ENCODE measurements at regions of chr11 and their contacts with region 1.

Region 1: DNA sequence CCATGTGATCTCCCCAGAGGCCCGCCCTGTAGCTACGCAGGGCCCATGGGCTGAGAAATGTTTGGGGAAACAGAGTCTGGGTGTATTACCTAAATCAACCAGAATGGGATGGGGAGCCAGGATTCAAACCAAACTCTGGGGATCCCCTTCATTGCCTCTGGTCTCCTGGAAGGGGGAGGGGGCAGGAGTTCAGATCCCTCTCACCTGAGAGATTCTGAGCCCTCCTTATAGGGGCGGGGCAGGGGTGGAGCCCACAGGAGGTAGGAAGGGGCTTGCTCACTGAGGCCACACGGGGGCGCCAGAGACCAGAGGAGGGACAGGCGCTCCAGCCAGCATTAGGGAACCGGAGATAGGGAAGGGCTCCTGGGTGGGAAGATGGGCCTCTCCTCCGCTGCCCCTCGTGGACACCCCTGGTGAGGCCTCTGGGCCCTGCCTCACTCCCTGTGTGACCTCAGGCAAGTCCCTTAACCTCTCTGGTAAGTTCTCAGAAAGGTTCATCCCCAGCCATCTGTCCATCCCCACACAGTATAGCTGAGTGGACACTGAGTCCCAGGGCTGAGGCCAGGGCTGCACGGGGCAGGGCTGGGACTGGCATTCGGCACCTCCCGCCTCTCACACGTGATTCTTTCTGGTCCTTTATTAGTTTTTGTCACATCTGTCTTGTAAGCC is 2.7 kb upstream of the CDC42BPG start:
- DNase-seq: peak; percentile 97
- H3K4me3 Mint-ChIP-seq: no peak overlapping the region
- H3K27ac Mint-ChIP-seq: peak overlapping the region; percentile 33
- H3K4me1 Mint-ChIP-seq: peaks cover 65% of the 10 kb centered on the region
- H3K27me3 Mint-ChIP-seq: no peaks in the 10 kb centered on the region
- CTCF ChIP-seq: peak; percentile 94

Region 2: GRCh38 chr11:64878494-64879243 is 31.5 kb after region 1 on chr11 and contains the start of gene EHD1:
- CTCF ChIA-PET with region 1: interaction called, 19 read pairs
- intact Hi-C with region 1: no loop called
- DNase-seq: peak; percentile 99
- H3K4me3 Mint-ChIP-seq: peak within 1 kb of the TSS; percentile 98
- H3K27ac Mint-ChIP-seq: peak within 1 kb of the TSS; percentile 93
- H3K4me1 Mint-ChIP-seq: peaks cover 28% of the 10 kb centered on the region
- H3K27me3 Mint-ChIP-seq: no peaks in the 10 kb centered on the region
- CTCF ChIP-seq: peak; percentile 7
- total RNA-seq, gene EHD1: 92.8 and 101 TPM in 2 replicates

Region 3: GRCh38 chr11:64894070-64894796 is 47.1 kb after region 1 on chr11:
- CTCF ChIA-PET with region 1: interaction called, 49 read pairs
- intact Hi-C with region 1: loop called (anchors 2 kb)
- DNase-seq: peak; percentile 93
- H3K4me3 Mint-ChIP-seq: peak overlapping the region; percentile 7
- H3K27ac Mint-ChIP-seq: no peak overlapping the region
- H3K4me1 Mint-ChIP-seq: peaks cover 32% of the 10 kb centered on the region
- H3K27me3 Mint-ChIP-seq: no peaks in the 10 kb centered on the region
- CTCF ChIP-seq: peak; percentile 87

Region 4: GRCh38 chr11:65013692-65014145 is 166.6 kb after region 1 on chr11:
- CTCF ChIA-PET with region 1: interaction called, 10 read pairs
- intact Hi-C with region 1: loop called (anchors 5 kb)
- DNase-seq: peak; percentile 92
- H3K4me3 Mint-ChIP-seq: peak overlapping the region; percentile 81
- H3K27ac Mint-ChIP-seq: peak overlapping the region; percentile 91
- H3K4me1 Mint-ChIP-seq: peaks cover 25% of the 10 kb centered on the region
- H3K27me3 Mint-ChIP-seq: no peaks in the 10 kb centered on the region
- CTCF ChIP-seq: peak; percentile 72

Measured in Calu3 (cell line).